Activated CD4-positive, alpha-beta T cell treated with anti-CD3 and anti-CD28 coated beads for 36 hours (primary cell): ENCODE measurements at regions of chr12 and their contacts with region 1.

Region 1: DNA sequence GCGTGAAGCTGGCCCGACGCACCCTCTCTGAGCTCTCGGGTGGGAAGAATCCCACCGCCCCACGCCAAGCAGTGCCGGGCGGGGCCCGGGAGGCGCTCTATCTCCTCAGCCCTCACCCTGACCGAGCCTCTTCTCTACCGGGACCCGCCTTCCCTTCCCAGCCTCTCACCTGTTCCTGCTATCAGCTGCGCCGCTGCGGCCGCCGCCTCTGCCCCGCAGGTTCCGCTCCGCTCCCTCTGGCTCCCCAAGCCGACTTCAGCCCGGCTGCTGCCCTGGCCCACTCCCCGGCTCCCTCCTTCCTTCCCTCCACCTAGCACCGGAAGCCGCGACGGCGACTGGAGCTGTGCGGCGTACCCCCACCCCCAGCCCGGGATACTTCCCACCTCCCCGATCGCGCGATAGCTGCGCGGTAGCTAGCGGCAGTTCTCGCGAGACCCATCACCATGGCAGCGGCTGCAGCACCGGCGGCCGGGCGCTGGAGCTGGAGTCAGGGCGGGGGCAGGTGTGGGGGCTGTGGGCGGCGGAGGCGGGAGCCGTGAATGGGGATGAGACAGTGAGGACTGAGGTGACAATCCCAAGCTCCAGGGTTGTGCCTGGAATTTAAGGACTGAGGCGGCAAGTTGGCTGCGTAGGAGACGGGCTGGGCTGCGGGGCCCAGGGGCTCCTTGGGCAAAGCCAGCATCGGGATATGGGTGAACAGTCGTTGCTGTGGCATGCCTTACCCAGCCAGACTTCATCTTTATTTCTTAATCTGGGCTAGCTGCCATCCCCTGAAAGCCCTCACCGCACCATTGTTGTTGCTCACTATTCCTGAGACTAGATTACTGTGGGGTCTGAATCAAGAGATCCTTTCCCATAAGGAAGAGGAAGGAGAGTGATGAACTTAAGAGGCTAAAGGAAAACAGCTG is at the start of gene ARF3:
- DNase-seq: peak; percentile 97
- ATAC-seq: peak; percentile 99
- H3K4me3 Mint-ChIP-seq: peak within 1 kb of the TSS; percentile 92
- H3K27ac Mint-ChIP-seq: peak within 1 kb of the TSS; percentile 74
- H3K4me1 Mint-ChIP-seq: peaks cover 23% of the 10 kb centered on the region
- H3K27me3 Mint-ChIP-seq: no peaks in the 10 kb centered on the region
- total RNA-seq, gene ARF3: 84.7 to 96.1 TPM

Region 2: GRCh38 chr12:48640854-48641253 is 316.5 kb before region 1 on chr12:
- CTCF ChIA-PET with region 1: no interaction called
- POLR2A ChIA-PET with region 1: no interaction called
- intact Hi-C with region 1: no loop called
- DNase-seq: no peak
- ATAC-seq: no peak
- H3K4me3 Mint-ChIP-seq: no peak overlapping the region
- H3K27ac Mint-ChIP-seq: no peak overlapping the region
- H3K4me1 Mint-ChIP-seq: peaks cover 6% of the 10 kb centered on the region
- H3K27me3 Mint-ChIP-seq: no peaks in the 10 kb centered on the region

Region 3: DNA sequence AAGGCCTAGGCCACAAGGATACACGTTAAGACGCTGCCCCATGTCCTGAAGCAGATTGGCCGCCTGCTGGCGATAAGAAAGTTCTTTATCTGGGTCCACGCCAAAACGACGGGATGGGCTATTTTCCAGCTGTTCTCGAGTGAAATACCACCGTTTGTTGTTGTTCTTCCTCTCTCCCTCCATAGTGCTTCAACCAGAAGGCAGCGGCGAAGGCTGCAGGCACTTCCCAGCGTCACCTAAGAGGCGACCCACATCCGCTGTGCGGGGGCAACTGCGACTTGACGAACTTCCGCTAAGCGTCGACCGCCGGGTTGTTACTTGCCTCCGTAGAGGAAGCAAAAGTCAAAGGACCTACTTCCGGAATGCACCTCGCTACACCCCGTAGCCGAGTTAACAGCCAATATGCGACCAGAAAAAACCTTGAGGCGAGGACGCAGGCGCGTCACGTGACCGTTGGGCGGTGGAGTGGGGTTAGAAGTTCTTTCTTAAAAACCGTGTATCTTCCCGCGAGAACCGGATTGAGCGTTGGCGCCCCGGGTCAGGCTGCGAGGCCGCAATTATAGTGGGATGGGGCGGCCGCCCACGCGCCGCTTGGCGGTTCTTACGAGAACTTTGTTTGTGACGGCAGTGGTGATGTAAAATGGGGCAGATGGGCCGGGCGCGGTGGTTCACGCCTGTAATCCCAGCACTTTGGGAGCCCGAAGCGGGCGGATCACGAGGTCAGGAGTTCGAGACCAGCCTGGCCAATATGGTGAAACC is 240.7 kb before region 1 on chr12 and contains the start of gene CCNT1:
- CTCF ChIA-PET with region 1: no interaction called
- POLR2A ChIA-PET with region 1: no interaction called
- intact Hi-C with region 1: loop called in 1 of 2 experiments (anchors 1 kb)
- DNase-seq: peak; percentile 100
- ATAC-seq: peak; percentile 95
- H3K4me3 Mint-ChIP-seq: peak within 1 kb of the TSS; percentile 99
- H3K27ac Mint-ChIP-seq: peak within 1 kb of the TSS; percentile 99
- H3K4me1 Mint-ChIP-seq: peaks cover 37% of the 10 kb centered on the region
- H3K27me3 Mint-ChIP-seq: no peaks in the 10 kb centered on the region
- total RNA-seq, gene CCNT1: 82.2 to 85.1 TPM

Region 4: DNA sequence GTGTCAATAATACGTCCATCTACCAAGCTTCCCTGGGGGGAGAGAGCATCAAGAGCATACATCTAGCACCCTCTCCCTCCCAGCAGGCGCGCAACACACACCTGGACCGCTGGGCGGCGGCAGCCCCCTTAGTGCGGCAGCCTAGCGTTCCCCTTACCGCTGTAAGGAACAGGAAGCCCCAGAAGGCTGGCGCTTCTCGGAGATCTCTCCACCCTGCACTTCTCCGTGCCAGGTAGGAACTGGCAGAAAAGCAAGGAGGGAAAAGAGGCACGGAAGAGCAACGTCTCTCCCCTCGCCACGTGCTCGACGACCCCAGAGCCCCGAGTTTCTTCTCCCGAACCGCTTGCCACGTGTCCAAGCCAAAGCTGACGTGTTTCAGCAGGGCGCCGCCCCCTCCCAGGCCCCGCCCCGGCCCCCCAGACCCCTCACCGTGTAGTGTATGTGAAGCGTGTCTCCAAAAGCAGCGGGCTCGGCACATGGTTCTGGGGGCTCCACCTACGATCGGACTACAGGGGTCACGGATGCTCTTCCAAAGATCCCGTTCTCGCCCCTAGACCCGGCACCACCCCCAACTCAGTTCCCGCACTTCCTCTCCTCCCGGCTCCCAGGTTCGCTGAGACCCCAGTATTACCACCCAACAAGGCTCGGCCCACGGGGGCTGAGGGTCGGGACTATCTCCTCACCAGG is 32.6 kb before region 1 on chr12:
- CTCF ChIA-PET with region 1: interaction called, 7 read pairs
- POLR2A ChIA-PET with region 1: interaction called, 5 read pairs
- intact Hi-C with region 1: loop called in 1 of 2 experiments (anchors 1 kb)
- DNase-seq: peak; percentile 85
- ATAC-seq: peak; percentile 75
- H3K4me3 Mint-ChIP-seq: peak overlapping the region; percentile 83
- H3K27ac Mint-ChIP-seq: peak overlapping the region; percentile 93
- H3K4me1 Mint-ChIP-seq: peaks cover 52% of the 10 kb centered on the region
- H3K27me3 Mint-ChIP-seq: no peaks in the 10 kb centered on the region

Region 5: GRCh38 chr12:48977315-48978281 is 20.2 kb after region 1 on chr12:
- CTCF ChIA-PET with region 1: interaction called, 18 read pairs
- POLR2A ChIA-PET with region 1: interaction called, 4 read pairs
- intact Hi-C with region 1: loop called (anchors 1 kb)
- DNase-seq: peak; percentile 92
- ATAC-seq: peak; percentile 69
- H3K4me3 Mint-ChIP-seq: peak overlapping the region; percentile 42
- H3K27ac Mint-ChIP-seq: peak overlapping the region; percentile 10
- H3K4me1 Mint-ChIP-seq: peaks cover 54% of the 10 kb centered on the region
- H3K27me3 Mint-ChIP-seq: peaks cover 73% of the 10 kb centered on the region

Region 6: DNA sequence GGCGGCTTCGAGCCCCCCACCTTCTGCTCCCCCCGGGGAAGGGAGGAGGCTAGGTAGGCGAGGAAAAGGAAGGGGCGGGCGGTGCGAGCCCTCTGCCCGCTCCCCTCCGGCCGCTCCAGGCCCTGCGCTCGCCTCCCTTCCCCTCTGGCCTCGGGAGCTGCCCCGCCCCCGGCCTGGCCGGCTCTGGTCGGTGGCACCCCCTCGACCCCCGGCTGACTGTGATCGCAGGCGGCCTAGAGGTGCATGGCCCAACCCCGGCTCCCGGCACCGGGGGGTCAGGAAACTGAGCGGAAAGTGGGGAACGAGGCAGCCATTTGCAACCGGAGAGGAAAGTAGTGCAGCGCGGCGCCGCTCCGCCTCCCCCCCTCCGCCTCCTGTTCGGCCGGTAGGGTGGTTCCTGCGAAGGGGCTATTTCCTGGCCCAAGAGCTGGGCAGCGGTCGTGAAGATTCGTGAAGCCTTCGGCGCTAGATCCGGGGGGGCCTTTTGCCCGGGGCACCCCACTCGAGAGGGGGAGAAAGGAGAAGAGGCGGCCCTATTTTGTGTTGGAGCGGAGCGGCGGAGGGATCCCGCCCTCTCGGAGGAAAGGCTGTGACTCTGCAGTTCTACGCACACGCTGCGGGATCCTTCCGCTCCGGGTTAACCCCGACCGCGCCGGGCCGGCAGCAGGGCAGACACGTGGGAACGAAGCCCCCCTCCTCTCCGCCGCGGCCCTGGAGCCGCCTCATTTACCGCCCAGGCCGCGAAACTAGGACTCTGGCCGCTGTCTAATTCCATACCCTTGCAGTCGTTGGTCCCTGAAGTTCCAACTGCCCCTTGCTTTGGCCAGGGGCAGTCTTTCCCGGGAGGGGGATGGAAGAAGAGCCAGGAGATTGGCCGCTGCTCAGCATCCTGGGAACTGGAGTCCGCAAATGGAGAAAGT is 103.1 kb after region 1 on chr12 and contains the start of gene KMT2D:
- CTCF ChIA-PET with region 1: interaction called, 3 read pairs
- POLR2A ChIA-PET with region 1: no interaction called
- intact Hi-C with region 1: loop called in 1 of 2 experiments (anchors 1 kb)
- DNase-seq: peak; percentile 94
- ATAC-seq: peak; percentile 75
- H3K4me3 Mint-ChIP-seq: peak within 1 kb of the TSS; percentile 98
- H3K27ac Mint-ChIP-seq: peak within 1 kb of the TSS; percentile 95
- H3K4me1 Mint-ChIP-seq: peaks cover 45% of the 10 kb centered on the region
- H3K27me3 Mint-ChIP-seq: no peaks in the 10 kb centered on the region
- total RNA-seq, gene KMT2D: 48.3 to 58.2 TPM

Region 7: GRCh38 chr12:49188914-49189367 is 231.5 kb after region 1 on chr12 and contains the start of gene TUBA1A:
- CTCF ChIA-PET with region 1: no interaction called
- POLR2A ChIA-PET with region 1: interaction called, 3 read pairs
- intact Hi-C with region 1: loop called in 1 of 2 experiments (anchors 1 kb)
- DNase-seq: peak; percentile 97
- ATAC-seq: peak; percentile 95
- H3K4me3 Mint-ChIP-seq: peak within 1 kb of the TSS; percentile 92
- H3K27ac Mint-ChIP-seq: peak within 1 kb of the TSS; percentile 92
- H3K4me1 Mint-ChIP-seq: peaks cover 24% of the 10 kb centered on the region
- H3K27me3 Mint-ChIP-seq: no peaks in the 10 kb centered on the region
- total RNA-seq, gene TUBA1A: 75.7 to 98.5 TPM